Activated CD8-positive, alpha-beta memory T cell treated with anti-CD3 and anti-CD28 coated beads, Interleukin-2, amount 10 ng/mL, durations not matched to agents 7 days and 5 days (primary cell): ENCODE measurements at regions of chr10 and their contacts with region 1.

Region 1: GRCh38 chr10:71945819-71946474 is 18.2 kb upstream of the CHST3 start:
- DNase-seq: no peak
- ATAC-seq: no peak
- H3K4me3 Mint-ChIP-seq: no peak overlapping the region
- H3K27ac Mint-ChIP-seq: no peak overlapping the region
- H3K4me1 Mint-ChIP-seq: no peaks in the 10 kb centered on the region
- H3K27me3 Mint-ChIP-seq: peaks cover 16% of the 10 kb centered on the region

Region 2: DNA sequence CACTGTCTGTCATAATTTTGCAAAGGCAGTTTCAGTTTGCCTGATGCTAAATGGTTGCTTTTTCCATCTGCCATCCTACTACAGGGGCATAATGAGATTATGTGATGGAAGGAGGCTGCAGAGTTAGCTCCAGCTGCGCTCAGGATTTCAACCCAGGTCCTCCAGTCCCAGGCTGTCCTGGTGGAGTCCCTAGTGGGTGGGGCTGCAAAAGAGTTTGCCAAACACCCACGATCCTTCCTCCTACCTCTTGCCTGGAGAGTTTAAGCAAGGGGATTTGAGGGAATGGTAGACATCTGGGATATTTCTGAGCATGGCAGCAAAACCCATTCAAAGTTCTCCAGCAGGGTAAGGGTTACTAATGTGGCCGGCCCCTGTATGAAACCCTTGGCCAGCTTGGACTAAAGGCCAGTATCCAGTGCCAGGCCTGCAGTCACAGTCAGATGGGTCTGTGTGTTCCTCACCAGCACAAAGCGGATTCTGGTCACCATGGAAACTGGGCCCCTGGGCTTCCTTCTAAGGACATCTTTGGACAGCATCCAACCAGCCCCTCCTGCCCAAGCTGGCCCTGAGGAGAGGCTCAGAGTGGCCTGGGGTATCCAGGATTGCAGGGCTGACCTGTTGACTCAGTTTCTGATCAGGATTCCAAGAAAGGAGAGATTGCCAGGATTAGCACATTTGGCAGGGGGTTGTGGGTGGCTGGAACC is 24.5 kb before region 1 on chr10:
- CTCF ChIA-PET with region 1: no interaction called
- DNase-seq: no peak
- ATAC-seq: no peak
- H3K4me3 Mint-ChIP-seq: no peak overlapping the region
- H3K27ac Mint-ChIP-seq: no peak overlapping the region
- H3K4me1 Mint-ChIP-seq: no peaks in the 10 kb centered on the region
- H3K27me3 Mint-ChIP-seq: peaks cover 9% of the 10 kb centered on the region

Region 3: DNA sequence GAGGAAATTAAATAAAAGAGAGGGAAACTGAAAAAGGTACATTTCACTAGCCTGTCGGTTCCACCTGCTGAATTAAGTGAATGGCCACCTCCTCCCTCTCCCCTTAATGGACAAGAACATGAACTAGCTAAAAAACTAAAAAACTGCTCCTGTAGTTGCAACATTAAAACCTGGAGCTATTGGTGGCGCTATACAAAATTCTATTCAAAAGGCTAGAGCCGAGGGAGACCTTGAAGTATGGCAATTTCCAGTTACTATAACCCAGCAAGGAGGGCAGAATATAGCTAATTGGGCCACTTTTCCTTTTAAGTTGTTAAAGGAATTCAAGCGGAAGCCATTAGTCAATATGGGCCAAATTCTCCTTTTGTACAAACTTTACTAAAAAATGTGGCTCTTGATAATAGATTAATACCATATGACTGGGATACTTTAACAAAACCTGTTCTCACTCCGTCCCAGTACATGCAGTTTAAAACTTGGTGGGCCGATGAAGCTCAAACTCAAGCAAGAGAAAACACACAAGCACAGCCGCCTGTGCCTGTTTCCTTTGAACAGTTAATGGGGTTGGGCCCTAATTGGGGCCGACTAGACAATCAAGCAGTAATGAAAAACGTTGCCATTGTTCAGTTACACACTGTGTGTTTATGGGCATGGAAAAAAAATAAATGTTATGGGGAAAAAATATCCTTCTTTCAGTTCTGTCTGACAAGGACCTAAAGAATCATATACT is 11.8 kb after region 1 on chr10:
- CTCF ChIA-PET with region 1: interaction called, 12 read pairs
- DNase-seq: no peak
- ATAC-seq: no peak
- H3K4me3 Mint-ChIP-seq: no peak overlapping the region
- H3K27ac Mint-ChIP-seq: no peak overlapping the region
- H3K4me1 Mint-ChIP-seq: no peaks in the 10 kb centered on the region
- H3K27me3 Mint-ChIP-seq: peaks cover 48% of the 10 kb centered on the region